ENCODE measurements at regions of chr10 and their contacts with region 1.

Region 1: DNA sequence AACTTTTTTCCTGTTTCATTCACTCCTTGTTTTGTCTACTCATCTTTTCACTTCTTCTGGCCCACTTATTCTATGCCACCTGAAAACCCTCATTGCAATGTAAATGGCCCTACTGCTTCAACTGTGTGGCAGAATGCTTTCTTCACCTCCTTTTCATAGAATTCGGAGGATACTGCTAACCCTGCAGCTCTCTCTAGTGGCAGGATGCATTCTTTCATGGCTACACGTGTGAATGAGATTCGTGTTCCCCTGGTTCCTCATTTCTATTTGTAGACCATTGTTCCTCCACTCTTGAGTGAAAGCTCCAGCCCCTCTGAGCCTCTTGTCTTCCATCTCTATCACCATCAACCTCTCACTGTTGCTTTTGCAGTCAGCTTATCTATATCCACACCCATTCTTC is 20.9 kb upstream of the CYP26C1 start:
- DNase-seq: peak in 1 of 9 experiments; percentile 9
- ATAC-seq: no peak
- H3K4me3 ChIP-seq: no peak overlapping the region
- H3K4me3 Mint-ChIP-seq: no peak overlapping the region
- H3K27ac ChIP-seq: no peak overlapping the region
- H3K27ac Mint-ChIP-seq: no peak overlapping the region
- H3K4me1 ChIP-seq: no peaks in the 10 kb centered on the region
- H3K4me1 Mint-ChIP-seq: no peaks in the 10 kb centered on the region
- H3K27me3 ChIP-seq: no peaks in the 10 kb centered on the region
- H3K27me3 Mint-ChIP-seq: no peaks in the 10 kb centered on the region
- CTCF ChIP-seq: no peak

Region 2: GRCh38 chr10:92880233-92880861 is 159.4 kb before region 1 on chr10:
- CTCF ChIA-PET with region 1: no interaction called
- POLR2A ChIA-PET with region 1: no interaction called
- intact Hi-C with region 1: loop called in 1 of 2 experiments (anchors 10 kb)
- DNase-seq: peak in 3 of 9 experiments; percentile 5 to 56 (median 45)
- ATAC-seq: no peak
- H3K4me3 ChIP-seq: no peak overlapping the region
- H3K4me3 Mint-ChIP-seq: no peak overlapping the region
- H3K27ac ChIP-seq: no peak overlapping the region
- H3K27ac Mint-ChIP-seq: no peak overlapping the region
- H3K4me1 ChIP-seq: peaks cover 12% of the 10 kb centered on the region
- H3K4me1 Mint-ChIP-seq: peaks cover 23% of the 10 kb centered on the region
- H3K27me3 ChIP-seq: no peaks in the 10 kb centered on the region
- H3K27me3 Mint-ChIP-seq: no peaks in the 10 kb centered on the region
- CTCF ChIP-seq: peak; percentile 52